ENCODE measurements at regions of chr6 and their contacts with region 1.

Region 1: DNA sequence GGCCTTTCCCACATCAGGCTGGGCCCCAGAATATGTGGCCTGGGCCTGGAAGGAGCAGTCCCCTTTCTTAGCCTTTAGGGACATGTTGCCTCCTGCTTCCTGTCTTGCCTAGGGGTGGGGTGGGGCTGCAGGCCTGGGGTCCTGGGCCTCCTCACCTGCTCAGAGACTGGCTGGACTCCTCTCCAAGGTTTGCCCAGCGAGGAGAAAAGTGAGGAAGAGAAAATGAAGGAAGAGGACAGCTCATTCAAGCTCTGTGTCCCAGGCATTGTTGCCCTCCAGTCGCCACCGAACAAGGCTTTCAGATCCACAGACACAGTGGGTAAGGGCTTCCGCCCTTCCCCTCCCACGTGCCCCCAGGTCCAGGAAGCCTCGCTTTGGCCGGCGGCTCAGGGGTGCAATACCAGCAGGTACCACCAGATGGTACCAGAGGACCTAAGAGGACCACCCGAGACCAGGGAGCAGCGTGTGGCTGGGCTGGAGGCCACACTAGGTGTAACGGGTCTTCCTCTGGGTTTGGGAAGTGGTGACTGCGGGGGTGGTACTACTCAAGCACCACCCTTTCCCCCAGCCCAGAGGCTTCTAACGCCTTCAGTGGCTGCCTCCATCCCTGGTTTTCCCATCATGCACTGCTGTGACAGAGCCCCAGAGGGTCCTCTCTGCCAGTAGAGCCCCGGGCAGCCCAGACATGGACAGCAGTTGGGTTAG is 5.5 kb upstream of the BAK1 start:
- DNase-seq: peak; percentile 89 to 92
- H3K4me3 ChIP-seq: no peak overlapping the region
- H3K27ac ChIP-seq: peak overlapping the region in 3 of 5 donors; percentile 6 to 20 (median 16)
- H3K4me1 ChIP-seq: peaks cover 18 to 31% (median 27%) of the 10 kb centered on the region in 4 donors
- H3K27me3 ChIP-seq: no peaks in the 10 kb centered on the region
- CTCF ChIP-seq: peak in 6 of 7 experiments; percentile 78 to 100 (median 97)
- EP300 ChIP-seq: no peak
- POLR2A ChIP-seq: no peak

Region 2: DNA sequence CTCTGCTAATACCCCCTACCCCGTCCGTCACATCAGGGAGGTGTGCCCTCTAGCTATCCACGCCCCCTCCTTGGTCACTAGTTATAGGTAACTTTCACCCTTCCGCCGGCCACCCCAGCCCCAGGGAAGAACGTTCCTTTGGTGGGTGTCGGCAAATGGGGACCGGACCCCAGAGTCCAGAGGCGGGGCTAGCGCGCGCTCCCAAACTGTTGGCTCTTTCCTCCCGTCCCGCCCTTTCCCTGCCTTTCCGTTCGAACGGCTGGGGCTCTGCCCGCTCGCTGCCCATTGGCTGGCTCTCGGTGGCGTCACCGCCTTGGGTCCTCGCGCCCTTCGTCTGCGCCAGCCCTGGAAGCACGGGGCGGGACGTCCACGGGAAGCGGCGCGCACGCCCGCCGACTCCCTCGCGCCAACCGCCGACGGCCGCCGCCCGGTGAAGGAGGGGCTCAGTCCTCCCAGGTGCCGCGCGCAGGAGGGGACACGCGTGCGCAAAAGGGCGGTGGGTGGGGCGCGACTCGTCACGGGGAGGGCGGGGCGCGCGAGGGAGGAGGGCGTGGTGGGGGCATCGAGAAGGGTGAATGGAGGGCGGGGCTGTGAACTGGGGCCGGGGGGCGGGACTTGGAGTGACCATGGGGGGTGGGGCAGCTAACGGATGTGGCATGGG is 175.4 kb before region 1 on chr6:
- intact Hi-C with region 1: no loop called
- DNase-seq: peak; percentile 98 to 100
- H3K4me3 ChIP-seq: peak overlapping the region; percentile 94 to 100 (median 98)
- H3K27ac ChIP-seq: peak overlapping the region; percentile 95 to 99 (median 99)
- H3K4me1 ChIP-seq: peaks cover 12 to 49% (median 38%) of the 10 kb centered on the region in 4 donors
- H3K27me3 ChIP-seq: no peaks in the 10 kb centered on the region
- CTCF ChIP-seq: no peak
- EP300 ChIP-seq: no peak
- POLR2A ChIP-seq: peak in 1 of 4 donors; percentile 55

Region 3: GRCh38 chr6:33467091-33467490 is 118.5 kb before region 1 on chr6:
- intact Hi-C with region 1: no loop called
- DNase-seq: no peak
- H3K4me3 ChIP-seq: no peak overlapping the region
- H3K27ac ChIP-seq: no peak overlapping the region
- H3K4me1 ChIP-seq: no peaks in the 10 kb centered on the region
- H3K27me3 ChIP-seq: no peaks in the 10 kb centered on the region
- CTCF ChIP-seq: no peak
- EP300 ChIP-seq: no peak
- POLR2A ChIP-seq: no peak

Region 4: DNA sequence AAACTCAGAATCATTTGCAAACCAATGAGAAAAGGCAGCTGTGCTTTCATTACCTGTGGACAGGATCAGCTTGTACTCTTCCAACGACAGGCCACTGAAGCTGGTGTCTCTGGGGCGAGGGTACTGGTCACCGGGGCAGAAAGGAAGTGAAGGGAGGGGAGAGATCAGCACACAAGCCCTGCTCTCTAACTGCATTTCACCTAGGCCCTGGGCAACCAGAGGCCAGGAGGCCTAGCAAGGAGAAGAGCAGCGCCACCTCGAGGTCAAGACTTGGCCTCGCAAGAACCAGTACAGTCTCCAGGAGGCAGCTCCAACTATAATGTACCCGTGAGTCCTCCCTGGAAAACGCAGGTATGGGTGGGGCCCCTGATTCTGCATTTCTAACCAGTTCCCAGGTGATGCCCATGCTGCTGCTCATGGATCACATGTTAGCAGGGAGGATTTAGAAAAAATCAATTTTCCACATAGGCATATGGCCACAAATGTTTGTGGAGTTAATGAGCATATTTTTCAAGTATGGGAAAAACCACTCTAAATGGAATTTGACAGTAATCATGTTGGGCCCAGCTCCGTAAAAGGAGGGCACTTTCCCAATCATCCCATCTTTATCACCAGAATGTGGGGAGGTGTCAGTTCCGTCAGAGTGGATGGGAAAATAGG is 115.0 kb after region 1 on chr6:
- intact Hi-C with region 1: loop called (anchors 5 kb)
- DNase-seq: peak; percentile 82 to 92
- H3K4me3 ChIP-seq: no peak overlapping the region
- H3K27ac ChIP-seq: peak overlapping the region in 2 of 5 donors; percentile 12 to 36
- H3K4me1 ChIP-seq: peaks cover 14 to 35% (median 27%) of the 10 kb centered on the region in 4 donors
- H3K27me3 ChIP-seq: no peaks in the 10 kb centered on the region
- CTCF ChIP-seq: peak in 4 of 7 experiments; percentile 40 to 71 (median 60)
- EP300 ChIP-seq: no peak
- POLR2A ChIP-seq: no peak

Region 5: GRCh38 chr6:33802186-33803064 is 216.9 kb after region 1 on chr6:
- intact Hi-C with region 1: no loop called
- DNase-seq: no peak
- H3K4me3 ChIP-seq: no peak overlapping the region
- H3K27ac ChIP-seq: no peak overlapping the region
- H3K4me1 ChIP-seq: peaks cover 0 to under 1% (median 0%) of the 10 kb centered on the region in 4 donors
- H3K27me3 ChIP-seq: peaks cover 0 to 94% (median 10%) of the 10 kb centered on the region in 3 donors
- CTCF ChIP-seq: no peak
- EP300 ChIP-seq: no peak
- POLR2A ChIP-seq: no peak

Region 6: DNA sequence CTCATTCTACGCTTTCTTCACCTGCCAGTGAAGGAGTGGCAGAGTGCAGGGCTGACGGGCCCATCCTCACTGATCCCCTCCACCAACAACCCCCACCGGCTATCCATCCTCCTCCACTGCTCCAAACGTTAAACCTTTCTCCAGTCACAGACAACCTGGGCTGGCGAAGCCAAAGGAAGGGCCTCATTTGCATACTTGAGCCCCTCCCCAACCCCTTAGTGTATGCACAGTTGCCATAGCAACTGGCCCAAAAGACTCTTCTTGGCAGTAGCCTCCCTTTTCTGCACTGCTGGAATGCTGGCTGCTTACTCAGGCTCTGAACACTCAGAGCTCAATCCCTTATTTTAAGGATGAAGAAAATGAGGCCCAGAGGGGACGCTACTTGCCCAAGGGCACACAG is 430.0 kb after region 1 on chr6:
- intact Hi-C with region 1: no loop called
- DNase-seq: peak in 1 of 2 donors; percentile 75
- H3K4me3 ChIP-seq: no peak overlapping the region
- H3K27ac ChIP-seq: no peak overlapping the region
- H3K4me1 ChIP-seq: no peaks in the 10 kb centered on the region
- H3K27me3 ChIP-seq: peaks cover 0 to 5% (median 0%) of the 10 kb centered on the region in 3 donors
- CTCF ChIP-seq: no peak
- EP300 ChIP-seq: no peak
- POLR2A ChIP-seq: no peak